Activated CD4-positive, alpha-beta memory T cell treated with anti-CD3 and anti-CD28 coated beads for 36 hours (primary cell): ENCODE measurements at regions of chr1 and their contacts with region 1.

Region 1: DNA sequence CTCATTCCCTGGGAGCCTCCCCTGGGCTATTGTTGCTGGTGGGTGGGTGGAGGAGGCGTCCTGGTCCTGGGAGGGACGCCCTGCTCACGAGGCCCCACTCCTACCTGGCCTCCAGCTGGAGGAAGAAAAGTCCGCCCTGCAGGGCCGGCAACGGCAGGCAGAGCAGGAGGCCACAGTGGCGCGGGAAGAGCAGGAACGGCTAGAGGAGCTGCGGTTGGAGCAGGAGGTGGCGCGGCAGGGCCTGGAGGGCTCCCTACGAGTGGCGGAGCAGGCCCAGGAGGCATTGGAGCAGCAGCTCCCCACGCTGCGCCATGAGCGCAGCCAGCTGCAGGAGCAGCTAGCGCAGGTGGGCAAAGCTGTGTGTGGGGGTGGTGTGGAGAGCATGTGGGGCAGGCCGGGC is 24.9 kb downstream of the CROCC start:
- DNase-seq: no peak
- H3K4me3 Mint-ChIP-seq: no peak overlapping the region
- H3K27ac Mint-ChIP-seq: no peak overlapping the region
- H3K4me1 Mint-ChIP-seq: no peaks in the 10 kb centered on the region
- H3K27me3 Mint-ChIP-seq: no peaks in the 10 kb centered on the region

Region 2: GRCh38 chr1:15141935-15142539 is 1804.6 kb before region 1 on chr1:
- CTCF ChIA-PET with region 1: no interaction called
- POLR2A ChIA-PET with region 1: no interaction called
- intact Hi-C with region 1: no loop called
- DNase-seq: no peak
- H3K4me3 Mint-ChIP-seq: no peak overlapping the region
- H3K27ac Mint-ChIP-seq: no peak overlapping the region
- H3K4me1 Mint-ChIP-seq: no peaks in the 10 kb centered on the region
- H3K27me3 Mint-ChIP-seq: peaks cover 44% of the 10 kb centered on the region

Region 3: DNA sequence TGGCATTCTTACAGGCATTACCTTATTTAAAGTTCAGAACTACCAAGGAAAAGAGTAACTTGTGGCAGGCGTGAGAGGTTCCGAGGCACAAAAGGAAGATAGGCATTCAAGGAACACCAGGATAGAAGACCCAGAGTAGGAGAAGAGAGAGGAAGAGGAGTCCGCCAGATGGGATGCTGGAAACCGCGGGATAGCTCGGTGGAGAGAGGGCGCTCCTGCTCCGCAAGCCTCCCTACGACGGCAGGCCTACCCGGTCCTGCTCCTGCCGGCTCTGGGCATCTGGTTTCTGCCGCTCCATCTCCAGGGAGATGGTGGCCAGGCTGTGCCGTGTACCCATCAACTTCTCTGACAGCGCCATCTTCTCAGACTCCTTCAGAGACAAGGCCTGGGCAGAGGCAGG is 327.9 kb before region 1 on chr1:
- CTCF ChIA-PET with region 1: interaction called, 19 read pairs
- POLR2A ChIA-PET with region 1: interaction called, 3 read pairs
- intact Hi-C with region 1: loop called (anchors 1 kb)
- DNase-seq: no peak
- H3K4me3 Mint-ChIP-seq: no peak overlapping the region
- H3K27ac Mint-ChIP-seq: no peak overlapping the region
- H3K4me1 Mint-ChIP-seq: no peaks in the 10 kb centered on the region
- H3K27me3 Mint-ChIP-seq: no peaks in the 10 kb centered on the region

Region 4: DNA sequence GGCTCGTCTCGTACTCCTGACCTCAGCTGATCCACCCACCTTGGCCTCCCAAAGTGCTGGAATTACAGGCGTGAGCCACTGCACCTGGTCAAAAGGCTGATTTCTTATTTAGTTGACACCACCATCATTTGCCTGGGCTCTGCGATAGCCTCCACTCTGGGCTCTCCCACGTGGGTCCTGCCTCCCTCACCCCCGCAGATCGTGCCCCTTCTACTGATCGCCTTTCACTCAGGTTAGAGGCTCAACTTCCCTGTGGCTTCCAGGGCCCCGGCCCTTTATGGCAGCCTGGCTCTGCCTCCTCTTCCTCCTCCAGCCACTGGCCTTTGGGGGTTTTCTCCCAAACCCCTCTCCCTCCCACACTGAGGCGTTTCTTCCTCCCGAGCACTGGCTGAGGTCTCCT is 36.3 kb after region 1 on chr1:
- CTCF ChIA-PET with region 1: no interaction called
- POLR2A ChIA-PET with region 1: no interaction called
- intact Hi-C with region 1: loop called (anchors 1 kb)
- DNase-seq: no peak
- H3K4me3 Mint-ChIP-seq: no peak overlapping the region
- H3K27ac Mint-ChIP-seq: no peak overlapping the region
- H3K4me1 Mint-ChIP-seq: peaks cover 9% of the 10 kb centered on the region
- H3K27me3 Mint-ChIP-seq: peaks cover 18% of the 10 kb centered on the region

Region 5: GRCh38 chr1:17045634-17046333 is 99.1 kb after region 1 on chr1:
- CTCF ChIA-PET with region 1: interaction called, 27 read pairs
- POLR2A ChIA-PET with region 1: no interaction called
- intact Hi-C with region 1: no loop called
- DNase-seq: no peak
- H3K4me3 Mint-ChIP-seq: no peak overlapping the region
- H3K27ac Mint-ChIP-seq: no peak overlapping the region
- H3K4me1 Mint-ChIP-seq: peaks cover 13% of the 10 kb centered on the region
- H3K27me3 Mint-ChIP-seq: no peaks in the 10 kb centered on the region

Region 6: GRCh38 chr1:17056551-17056950 is 109.9 kb after region 1 on chr1:
- CTCF ChIA-PET with region 1: no interaction called
- POLR2A ChIA-PET with region 1: no interaction called
- intact Hi-C with region 1: no loop called
- DNase-seq: no peak
- H3K4me3 Mint-ChIP-seq: no peak overlapping the region
- H3K27ac Mint-ChIP-seq: no peak overlapping the region
- H3K4me1 Mint-ChIP-seq: peaks cover 15% of the 10 kb centered on the region
- H3K27me3 Mint-ChIP-seq: no peaks in the 10 kb centered on the region